PC-3 (cell line): ENCODE measurements at regions of chr3 and their contacts with region 1.

Region 1: GRCh38 chr3:66554178-66554577 is 53.4 kb upstream of the LRIG1 start:
- DNase-seq: peak; percentile 49
- ATAC-seq: peak; percentile 60
- H3K4me3 ChIP-seq: no peak overlapping the region; the same call in 1 of the 2 replicates
- H3K27ac ChIP-seq: no peak overlapping the region
- H3K4me1 ChIP-seq: peaks cover 17% of the 10 kb centered on the region; the same call in 1 of the 2 replicates
- H3K27me3 ChIP-seq: no peaks in the 10 kb centered on the region
- CTCF ChIP-seq: no peak

Region 2: DNA sequence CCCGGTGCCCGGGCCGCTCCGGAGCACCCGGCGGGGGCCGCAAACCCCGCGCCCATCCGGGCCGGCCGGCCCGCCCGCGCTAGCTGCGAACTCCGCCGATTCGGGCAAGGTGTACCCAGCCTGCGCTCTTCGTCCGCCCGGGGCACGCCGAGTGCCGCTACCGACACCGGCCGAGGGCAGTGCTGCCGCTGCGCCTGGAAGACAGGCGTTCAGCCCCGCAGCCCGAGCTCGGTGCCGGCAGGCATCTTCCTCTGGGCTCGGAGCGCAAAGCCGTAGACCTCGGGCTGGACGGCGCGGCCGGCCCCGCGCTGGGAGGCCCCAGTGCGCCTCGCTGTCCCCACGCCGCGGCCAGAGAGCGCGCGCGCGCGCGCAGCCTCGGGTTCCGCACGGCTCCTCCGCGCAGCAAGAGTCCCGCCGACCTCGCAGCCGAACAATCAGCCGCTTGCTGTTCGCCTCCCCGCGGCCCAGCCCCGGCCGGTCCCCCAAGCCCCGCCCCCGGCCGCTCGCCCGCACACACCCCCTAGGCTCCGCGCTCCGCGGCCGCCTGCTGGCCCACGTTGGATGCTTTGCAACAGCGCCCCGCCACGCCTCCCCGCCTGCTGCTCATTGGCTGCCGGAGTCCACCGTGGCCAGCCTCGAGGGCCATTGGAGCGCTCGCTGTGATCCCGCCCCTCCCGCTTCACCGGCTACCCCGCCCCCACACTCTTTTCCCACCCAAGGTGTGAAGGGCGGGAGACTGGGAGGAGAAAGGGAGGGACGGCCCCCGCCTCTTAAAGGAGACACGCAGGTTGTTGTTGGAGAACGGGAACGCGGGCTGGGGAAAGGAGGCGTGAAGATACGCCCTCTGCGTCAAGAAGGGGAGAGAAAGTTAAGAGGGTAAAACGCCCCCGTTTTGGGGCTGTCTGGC is 53.3 kb before region 1 on chr3 and contains the start of gene LRIG1:
- CTCF ChIA-PET with region 1: no interaction called
- POLR2A ChIA-PET with region 1: no interaction called
- intact Hi-C with region 1: loop called (anchors 2 kb)
- DNase-seq: peak; percentile 88
- ATAC-seq: peak; percentile 99
- H3K4me3 ChIP-seq: peak within 1 kb of the TSS; percentile 64
- H3K27ac ChIP-seq: no peak within 1 kb of the TSS
- H3K4me1 ChIP-seq: no peaks in the 10 kb centered on the region
- H3K27me3 ChIP-seq: no peaks in the 10 kb centered on the region
- CTCF ChIP-seq: no peak
- total RNA-seq, gene LRIG1: 2.2 and 2.9 TPM in 2 replicates